GM18951 (cell line): ENCODE measurements at regions of chrX and their contacts with region 1.

Region 1: GRCh38 chrX:49922291-49923241 is at the start of gene CLCN5:
- POLR2A ChIP-seq: peak; percentile 57

Region 2: GRCh38 chrX:49610718-49611310 is 311.8 kb before region 1 on chrX:
- in situ Hi-C with region 1: no loop called
- POLR2A ChIP-seq: no peak

Region 3: DNA sequence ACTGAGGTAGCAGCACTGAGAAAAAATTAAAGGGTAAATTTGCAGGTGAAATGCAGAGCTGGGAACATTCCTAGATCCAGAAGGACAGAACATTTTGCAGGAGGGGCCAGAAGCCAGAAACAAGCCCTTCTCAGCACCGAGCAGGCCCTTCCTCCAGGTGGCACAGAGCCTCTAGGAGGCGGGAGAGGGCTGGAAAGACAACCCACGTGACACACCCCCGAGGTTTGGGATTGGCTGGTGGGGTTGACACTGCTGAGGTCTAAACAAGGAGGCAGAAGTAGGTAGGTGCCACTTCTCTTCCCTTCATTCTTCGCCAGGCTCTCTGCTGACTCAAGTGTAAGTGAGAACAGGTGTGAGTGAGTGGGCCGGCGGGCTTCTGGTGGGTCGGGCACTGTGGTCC is 93.5 kb before region 1 on chrX and contains the start of gene PAGE4:
- in situ Hi-C with region 1: no loop called
- POLR2A ChIP-seq: no peak

Region 4: DNA sequence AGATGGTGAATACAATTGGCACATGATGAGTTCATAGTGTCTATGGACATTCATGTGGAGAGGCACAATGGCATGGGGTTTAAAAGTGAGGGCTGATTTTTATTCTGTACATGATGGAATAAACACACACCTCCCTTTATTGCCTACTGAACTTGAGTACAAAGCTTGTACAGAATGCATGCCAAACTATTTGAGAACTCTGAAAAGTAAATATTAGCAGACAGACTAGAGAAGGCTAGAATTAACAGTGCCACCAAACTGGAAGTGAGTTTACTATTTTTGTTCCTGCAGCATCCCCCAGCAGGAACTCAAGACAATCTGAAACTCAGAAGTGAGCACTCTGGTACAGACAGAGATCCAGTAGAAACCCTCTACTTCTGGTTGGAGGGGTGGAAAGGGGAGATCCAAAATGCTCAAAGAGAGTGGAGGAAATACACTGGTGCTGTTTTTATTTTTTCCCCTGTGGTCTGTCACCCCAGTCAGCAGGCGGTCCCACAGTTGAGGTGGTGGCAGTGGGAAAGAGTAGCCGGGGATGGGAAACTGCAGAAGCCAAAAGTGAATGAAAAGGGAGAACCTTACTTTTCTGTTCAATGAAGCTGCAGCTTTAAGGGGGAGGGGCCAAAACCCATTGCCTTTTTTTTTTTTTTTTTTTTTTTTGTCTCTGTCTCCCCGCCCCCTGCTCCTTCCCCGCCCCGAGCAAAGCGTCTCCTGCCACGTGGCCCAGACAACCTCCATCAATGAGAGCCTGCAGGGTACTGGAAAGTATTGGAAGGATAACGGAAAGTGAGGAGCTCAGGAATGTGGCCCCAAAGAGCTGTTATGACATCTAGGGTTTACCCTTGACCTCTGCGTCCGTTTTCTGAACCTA is 257.7 kb after region 1 on chrX:
- in situ Hi-C with region 1: loop called (anchors 25 kb)
- POLR2A ChIP-seq: no peak

Region 5: GRCh38 chrX:51257490-51257889 is 1334.9 kb after region 1 on chrX:
- in situ Hi-C with region 1: no loop called
- POLR2A ChIP-seq: no peak